CD8-positive, alpha-beta memory T cell (primary cell): ENCODE measurements at regions of chr15 and their contacts with region 1.

Region 1: DNA sequence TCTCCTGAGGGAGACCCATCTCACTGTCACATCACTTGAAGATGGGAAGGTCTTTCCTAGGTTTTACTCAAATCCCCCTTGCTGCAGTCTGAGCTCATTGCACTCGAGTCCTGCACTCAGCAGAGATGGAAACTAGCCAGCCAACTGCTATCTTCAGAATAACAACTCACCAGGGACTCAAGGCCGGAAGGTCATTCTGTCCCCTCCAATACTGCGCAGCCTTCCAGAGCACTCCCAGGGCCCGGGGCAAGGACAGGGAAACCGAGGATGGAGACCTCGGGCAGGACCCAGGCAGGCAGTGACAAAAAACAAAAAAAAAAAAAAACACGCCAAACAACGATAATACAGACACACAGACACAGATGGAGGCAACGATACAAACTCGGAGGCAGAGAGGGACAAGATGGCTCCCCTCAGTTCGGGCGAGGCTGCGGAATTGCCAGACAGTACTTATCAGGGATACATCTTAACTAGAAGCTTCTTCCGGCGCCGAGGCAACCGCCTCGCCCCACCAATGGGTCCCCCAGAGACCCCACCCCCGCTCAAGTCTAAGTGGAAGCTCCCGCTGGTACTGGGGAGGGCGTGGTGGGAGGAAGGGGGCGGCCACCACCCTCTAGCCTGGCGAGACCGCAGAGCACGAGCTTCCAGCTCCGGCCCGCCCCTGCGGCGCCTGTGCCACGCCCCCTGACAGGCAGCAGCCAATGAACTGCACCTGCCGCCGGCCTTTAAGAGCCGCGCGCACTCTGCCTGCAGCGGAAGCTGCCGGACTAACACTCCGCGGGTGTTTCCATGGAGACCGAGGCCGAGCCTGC is 7.0 kb upstream of the MAP1A start:
- DNase-seq: peak; percentile 95 to 99 (median 97)
- H3K4me3 ChIP-seq: peak overlapping the region; percentile 89
- H3K4me3 Mint-ChIP-seq: peak overlapping the region; percentile 91 to 98 (median 94)
- H3K27ac ChIP-seq: peak overlapping the region; percentile 80
- H3K27ac Mint-ChIP-seq: peak overlapping the region; percentile 82 to 100 (median 98)
- H3K4me1 ChIP-seq: peaks cover 21% of the 10 kb centered on the region
- H3K4me1 Mint-ChIP-seq: peaks cover 22 to 43% (median 41%) of the 10 kb centered on the region in 3 donors
- H3K27me3 ChIP-seq: no peaks in the 10 kb centered on the region
- H3K27me3 Mint-ChIP-seq: peaks cover 0 to 2% of the 10 kb centered on the region in 2 donors

Region 2: DNA sequence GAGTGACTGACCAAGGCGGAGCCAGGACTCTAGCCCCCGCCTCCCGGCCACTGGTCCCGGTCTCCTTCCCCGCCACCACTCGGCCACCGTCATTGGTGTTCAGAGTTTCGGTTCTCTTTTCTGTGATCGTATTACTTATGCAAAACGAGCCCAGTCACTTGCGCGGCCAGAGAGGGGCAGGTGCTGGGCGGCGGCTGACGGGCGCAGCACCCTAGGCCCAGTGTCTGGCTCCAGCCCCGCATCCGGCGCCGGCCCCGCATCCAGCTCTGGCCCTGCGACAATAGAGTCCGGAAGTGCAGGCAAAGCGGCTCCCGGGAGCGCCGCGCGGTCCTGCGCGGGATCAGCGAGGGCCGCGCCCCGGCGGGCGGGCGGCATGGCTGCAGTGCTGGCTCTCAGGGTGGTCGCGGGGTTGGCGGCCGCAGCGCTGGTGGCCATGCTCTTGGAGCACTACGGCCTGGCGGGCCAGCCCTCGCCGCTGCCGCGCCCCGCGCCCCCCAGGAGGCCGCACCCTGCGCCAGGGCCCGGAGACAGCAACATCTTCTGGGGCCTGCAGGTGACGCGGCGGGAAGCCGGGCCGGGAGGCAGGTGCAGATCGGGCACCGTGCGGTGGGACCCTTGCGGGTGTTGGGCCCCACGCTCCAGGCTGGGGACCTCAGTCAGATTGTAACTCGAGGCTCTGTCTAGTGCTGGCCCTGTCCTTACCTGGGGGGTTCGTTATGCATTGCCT is 376.8 kb before region 1 on chr15 and contains the start of gene TMEM62:
- CTCF ChIA-PET with region 1: no interaction called
- POLR2A ChIA-PET with region 1: no interaction called
- DNase-seq: peak; percentile 50 to 76 (median 58)
- H3K4me3 ChIP-seq: peak within 1 kb of the TSS; percentile 92
- H3K4me3 Mint-ChIP-seq: peak within 1 kb of the TSS; percentile 89 to 98 (median 96)
- H3K27ac ChIP-seq: peak within 1 kb of the TSS; percentile 79
- H3K27ac Mint-ChIP-seq: peak within 1 kb of the TSS; percentile 81 to 98 (median 96)
- H3K4me1 ChIP-seq: peaks cover 26% of the 10 kb centered on the region
- H3K4me1 Mint-ChIP-seq: peaks cover 25 to 38% (median 27%) of the 10 kb centered on the region in 3 donors
- H3K27me3 ChIP-seq: no peaks in the 10 kb centered on the region
- H3K27me3 Mint-ChIP-seq: peaks cover 0 to 3% of the 10 kb centered on the region in 2 donors
- total RNA-seq, gene TMEM62: 13.2 to 18.1 TPM

Region 3: DNA sequence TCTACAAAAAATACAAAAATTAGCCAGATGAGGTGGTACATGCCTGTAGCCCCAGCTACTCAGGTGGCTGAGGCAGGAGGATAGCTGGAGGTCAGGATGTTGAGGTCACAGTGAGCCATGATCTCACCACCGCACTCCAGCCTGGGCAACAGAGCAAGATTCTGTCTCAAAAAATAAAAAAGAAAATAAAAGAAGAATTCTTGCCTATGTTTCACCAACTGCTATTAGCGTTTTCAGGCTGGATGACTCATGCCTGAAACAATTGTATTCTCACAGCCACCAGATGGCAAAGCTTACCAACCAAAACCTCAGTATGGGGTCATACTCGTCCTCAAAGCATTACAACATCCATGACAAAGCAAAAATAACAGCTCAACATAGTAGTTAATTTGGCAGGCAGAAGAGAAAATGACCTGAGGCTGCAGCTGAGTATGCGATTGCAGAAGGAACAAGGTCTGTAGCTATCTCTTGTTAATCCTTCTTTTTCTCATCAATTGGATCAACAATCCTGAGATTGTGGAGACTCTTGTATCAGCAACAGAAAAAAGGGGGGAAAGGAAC is 69.6 kb before region 1 on chr15:
- CTCF ChIA-PET with region 1: interaction called, 10 read pairs
- POLR2A ChIA-PET with region 1: no interaction called
- DNase-seq: peak in 2 of 5 donors; percentile 9 to 12
- H3K4me3 ChIP-seq: no peak overlapping the region
- H3K4me3 Mint-ChIP-seq: no peak overlapping the region
- H3K27ac ChIP-seq: no peak overlapping the region
- H3K27ac Mint-ChIP-seq: peak overlapping the region in 3 of 8 donors; percentile 51 to 68 (median 66)
- H3K4me1 ChIP-seq: no peaks in the 10 kb centered on the region
- H3K4me1 Mint-ChIP-seq: peaks cover 0 to 4% (median 4%) of the 10 kb centered on the region in 3 donors
- H3K27me3 ChIP-seq: no peaks in the 10 kb centered on the region
- H3K27me3 Mint-ChIP-seq: no peaks in the 10 kb centered on the region

Region 4: DNA sequence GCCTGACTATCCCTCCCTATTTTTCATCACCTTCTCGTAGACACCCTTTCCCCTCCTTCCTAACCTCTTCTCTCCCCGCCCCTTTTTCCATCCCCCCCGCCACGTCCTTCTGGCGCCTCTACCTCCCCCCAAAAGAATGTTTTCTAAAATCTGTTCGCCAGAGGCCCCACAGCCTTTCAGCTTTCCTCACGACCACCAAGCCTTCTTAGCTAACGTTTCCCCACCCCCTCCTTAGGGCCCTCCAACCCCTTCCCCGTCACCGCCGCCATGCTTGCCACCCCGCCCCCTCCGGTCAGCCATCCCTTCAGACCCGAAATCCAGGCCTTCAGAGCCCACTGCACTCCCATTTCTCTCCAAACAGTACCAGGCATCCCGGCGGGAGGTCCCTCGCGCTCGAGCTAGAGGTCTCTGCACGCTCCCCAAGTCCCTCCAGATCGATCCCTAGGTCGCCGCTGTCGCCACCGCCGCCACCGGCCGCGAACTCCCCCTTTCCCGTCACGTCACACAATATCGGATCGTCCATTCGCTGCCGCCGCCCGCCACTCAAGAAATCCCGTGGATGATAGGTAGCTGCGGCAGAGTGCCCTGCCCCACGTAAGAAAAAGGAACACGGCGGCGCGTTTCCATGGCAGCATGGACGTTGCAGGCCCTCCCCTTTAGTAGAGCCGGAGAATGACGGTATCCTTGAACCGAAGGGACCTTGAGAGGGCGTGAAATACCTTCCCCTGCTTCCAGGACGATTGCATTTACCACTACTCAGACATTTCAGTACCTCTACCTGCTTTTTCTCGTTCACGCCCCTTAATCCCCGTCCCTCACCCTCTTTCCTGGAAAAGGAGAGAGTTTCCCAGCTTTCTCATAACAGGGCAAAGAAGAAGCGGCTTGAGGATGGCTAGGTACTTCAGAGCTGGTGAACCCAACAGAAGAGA is 17.5 kb before region 1 on chr15 and contains the start of gene TP53BP1:
- CTCF ChIA-PET with region 1: interaction called, 20 read pairs
- POLR2A ChIA-PET with region 1: interaction called, 27 read pairs
- DNase-seq: peak; percentile 91 to 97 (median 93)
- H3K4me3 ChIP-seq: peak within 1 kb of the TSS; percentile 85
- H3K4me3 Mint-ChIP-seq: peak within 1 kb of the TSS; percentile 89 to 98 (median 94)
- H3K27ac ChIP-seq: peak within 1 kb of the TSS; percentile 92
- H3K27ac Mint-ChIP-seq: peak within 1 kb of the TSS; percentile 75 to 99 (median 98)
- H3K4me1 ChIP-seq: peaks cover 20% of the 10 kb centered on the region
- H3K4me1 Mint-ChIP-seq: peaks cover 28 to 40% (median 38%) of the 10 kb centered on the region in 3 donors
- H3K27me3 ChIP-seq: no peaks in the 10 kb centered on the region
- H3K27me3 Mint-ChIP-seq: no peaks in the 10 kb centered on the region
- total RNA-seq, gene TP53BP1: 28.7 to 29.1 TPM

Region 5: GRCh38 chr15:43527016-43527801 is 16.8 kb after region 1 on chr15:
- CTCF ChIA-PET with region 1: interaction called, 11 read pairs
- POLR2A ChIA-PET with region 1: no interaction called
- DNase-seq: no peak
- H3K4me3 ChIP-seq: no peak overlapping the region
- H3K4me3 Mint-ChIP-seq: no peak overlapping the region
- H3K27ac ChIP-seq: no peak overlapping the region
- H3K27ac Mint-ChIP-seq: peak overlapping the region in 1 of 8 donors; percentile 50
- H3K4me1 ChIP-seq: no peaks in the 10 kb centered on the region
- H3K4me1 Mint-ChIP-seq: peaks cover 3 to 7% (median 7%) of the 10 kb centered on the region in 3 donors
- H3K27me3 ChIP-seq: no peaks in the 10 kb centered on the region
- H3K27me3 Mint-ChIP-seq: peaks cover 0 to 3% of the 10 kb centered on the region in 2 donors

Region 6: DNA sequence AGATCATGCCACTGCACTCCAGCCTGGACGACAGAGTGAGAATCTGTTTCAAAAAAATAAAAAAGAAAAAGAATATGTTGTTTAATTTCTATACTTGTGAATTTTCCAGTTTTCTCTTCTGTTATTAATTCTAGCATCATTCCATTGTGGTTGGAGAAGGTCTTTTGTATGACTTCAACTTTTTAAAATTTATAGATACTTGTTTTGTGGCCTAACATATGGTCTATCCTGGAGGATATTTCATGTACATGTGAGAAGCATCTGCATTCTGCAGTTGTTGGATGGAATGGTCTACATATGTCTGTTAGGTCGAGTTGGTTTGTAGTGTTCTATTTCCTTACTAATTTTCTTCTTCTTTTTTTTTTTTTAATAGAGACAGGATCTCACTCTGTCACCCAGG is 42.6 kb after region 1 on chr15:
- CTCF ChIA-PET with region 1: no interaction called
- POLR2A ChIA-PET with region 1: no interaction called
- DNase-seq: no peak
- H3K4me3 ChIP-seq: no peak overlapping the region
- H3K4me3 Mint-ChIP-seq: no peak overlapping the region
- H3K27ac ChIP-seq: no peak overlapping the region
- H3K27ac Mint-ChIP-seq: no peak overlapping the region
- H3K4me1 ChIP-seq: no peaks in the 10 kb centered on the region
- H3K4me1 Mint-ChIP-seq: no peaks in the 10 kb centered on the region
- H3K27me3 ChIP-seq: no peaks in the 10 kb centered on the region
- H3K27me3 Mint-ChIP-seq: no peaks in the 10 kb centered on the region